ENCODE measurements at regions of chr6 and their contacts with region 1.

Region 1: DNA sequence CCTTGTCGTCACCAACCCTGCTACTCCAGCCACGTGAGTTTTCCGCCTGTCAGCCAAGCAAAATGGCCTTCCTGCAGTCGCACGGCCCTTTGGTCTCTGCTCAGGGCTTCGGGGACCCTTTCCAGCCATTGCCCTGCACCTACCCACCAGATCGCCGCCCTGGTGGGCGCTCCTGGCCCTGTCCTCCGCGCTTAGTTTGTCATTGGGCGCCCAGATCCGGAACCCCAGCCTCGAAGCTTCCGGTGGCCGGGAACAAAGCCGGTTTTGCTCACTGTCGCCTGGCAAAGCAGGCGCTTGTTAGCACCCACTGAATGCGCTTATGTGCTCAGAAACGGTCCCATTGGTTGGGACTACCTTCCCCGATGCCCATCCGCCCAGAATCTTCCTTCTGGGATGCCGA is 536 bp downstream of the ZFP57 start:
- DNase-seq: no peak

Region 2: GRCh38 chr6:29641430-29642148 is 38.8 kb before region 1 on chr6:
- in situ Hi-C with region 1: loop called (anchors 5 kb)
- DNase-seq: no peak

Region 3: GRCh38 chr6:31308050-31308844 is 1627.8 kb after region 1 on chr6:
- in situ Hi-C with region 1: no loop called
- DNase-seq: peak; percentile 75